Activated CD8-positive, alpha-beta T cell treated with anti-CD3 and anti-CD28 coated beads, Interleukin-2, amount 10 ng/mL, durations not matched to agents 7 days and 5 days (primary cell): ENCODE measurements at regions of chr12 and their contacts with region 1.

Region 1: DNA sequence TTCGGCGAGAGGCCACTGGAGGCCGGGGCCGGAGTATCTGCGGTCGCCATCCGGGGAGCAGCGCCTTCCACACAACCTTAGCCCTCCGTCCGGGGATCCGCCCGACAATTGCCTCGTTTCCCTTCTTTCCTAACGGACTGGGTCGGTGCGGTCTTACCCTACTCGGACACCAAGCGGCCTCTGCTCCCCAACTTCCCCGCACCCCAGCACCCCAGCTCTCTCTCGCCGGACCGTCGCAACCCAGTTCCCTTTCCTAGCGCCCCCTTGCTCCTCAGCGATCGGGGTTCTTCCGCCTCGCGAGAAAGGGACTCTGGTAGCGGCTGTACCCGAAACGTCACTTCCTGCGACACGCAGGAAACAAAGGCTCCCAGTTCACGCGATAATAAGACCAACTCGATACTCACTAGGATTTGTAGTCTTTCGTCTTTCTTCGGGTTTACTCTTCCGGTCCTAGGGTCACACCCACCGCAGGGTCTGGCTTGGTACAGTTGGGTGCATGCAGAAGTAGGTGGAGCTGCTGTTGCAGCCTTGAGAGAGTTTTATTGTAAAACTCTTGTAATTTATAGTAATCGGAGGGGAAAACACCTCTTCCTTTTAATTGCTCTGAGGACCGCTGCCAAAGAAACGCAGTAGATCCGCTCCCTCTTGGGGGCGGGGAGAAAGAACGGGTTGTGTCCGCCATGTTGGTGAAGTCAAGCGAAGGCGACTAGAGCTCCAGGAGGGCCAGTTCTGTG is at the start of gene ZFC3H1:
- DNase-seq: peak; percentile 96
- ATAC-seq: peak; percentile 90
- H3K4me3 Mint-ChIP-seq: peak within 1 kb of the TSS; percentile 98
- H3K27ac Mint-ChIP-seq: peak within 1 kb of the TSS; percentile 100
- H3K4me1 Mint-ChIP-seq: peaks cover 39% of the 10 kb centered on the region
- H3K27me3 Mint-ChIP-seq: no peaks in the 10 kb centered on the region
- total RNA-seq, gene ZFC3H1: 45.9 to 49.9 TPM

Region 2: GRCh38 chr12:71581206-71581605 is 82.5 kb before region 1 on chr12:
- CTCF ChIA-PET with region 1: no interaction called
- POLR2A ChIA-PET with region 1: no interaction called
- DNase-seq: no peak
- ATAC-seq: no peak
- H3K4me3 Mint-ChIP-seq: no peak overlapping the region
- H3K27ac Mint-ChIP-seq: no peak overlapping the region
- H3K4me1 Mint-ChIP-seq: no peaks in the 10 kb centered on the region
- H3K27me3 Mint-ChIP-seq: peaks cover 9% of the 10 kb centered on the region

Region 3: DNA sequence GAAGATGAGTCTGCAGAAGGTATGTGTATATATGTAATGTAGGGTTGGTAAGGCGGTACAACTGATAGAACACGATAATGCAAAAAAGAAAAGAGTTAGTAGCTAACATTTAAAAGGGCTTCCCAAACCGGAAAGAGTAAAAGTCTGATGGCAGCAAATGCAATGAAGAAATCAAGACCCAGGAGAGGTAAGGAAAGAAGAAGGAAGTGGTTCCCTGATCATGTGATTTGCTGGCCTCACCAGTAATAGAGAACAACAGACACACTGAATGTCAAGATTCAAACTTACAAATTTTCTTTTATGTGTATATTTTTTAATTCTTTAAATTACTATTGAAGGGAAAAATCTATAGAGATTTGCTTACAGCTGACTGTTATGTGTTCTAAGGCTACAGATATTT is 18.5 kb before region 1 on chr12:
- CTCF ChIA-PET with region 1: interaction called, 4 read pairs
- POLR2A ChIA-PET with region 1: interaction called, 20 read pairs
- DNase-seq: no peak
- ATAC-seq: no peak
- H3K4me3 Mint-ChIP-seq: no peak overlapping the region
- H3K27ac Mint-ChIP-seq: peak overlapping the region; percentile 62
- H3K4me1 Mint-ChIP-seq: peaks cover 15% of the 10 kb centered on the region
- H3K27me3 Mint-ChIP-seq: no peaks in the 10 kb centered on the region

Region 4: DNA sequence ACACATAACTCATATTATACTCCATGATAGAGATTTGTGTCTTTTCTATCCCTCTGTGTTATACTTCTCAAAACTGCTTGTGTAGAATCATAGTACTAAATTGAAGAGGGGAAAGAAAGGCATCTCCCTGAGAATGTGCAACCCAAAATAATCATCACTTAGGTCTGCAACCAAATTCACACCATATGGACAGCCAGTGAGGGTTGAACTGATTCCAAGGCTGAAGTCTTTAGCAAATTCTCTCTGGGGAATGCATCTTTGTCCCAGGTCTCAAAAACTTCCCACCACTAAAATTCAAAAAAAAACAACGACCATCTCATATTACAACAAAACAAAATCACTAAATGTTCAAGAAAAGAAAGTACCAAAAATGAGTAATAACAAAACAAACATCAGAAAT is 11.1 kb before region 1 on chr12:
- CTCF ChIA-PET with region 1: interaction called, 12 read pairs
- POLR2A ChIA-PET with region 1: interaction called, 5 read pairs
- DNase-seq: no peak
- ATAC-seq: no peak
- H3K4me3 Mint-ChIP-seq: no peak overlapping the region
- H3K27ac Mint-ChIP-seq: no peak overlapping the region
- H3K4me1 Mint-ChIP-seq: peaks cover 24% of the 10 kb centered on the region
- H3K27me3 Mint-ChIP-seq: no peaks in the 10 kb centered on the region

Region 5: DNA sequence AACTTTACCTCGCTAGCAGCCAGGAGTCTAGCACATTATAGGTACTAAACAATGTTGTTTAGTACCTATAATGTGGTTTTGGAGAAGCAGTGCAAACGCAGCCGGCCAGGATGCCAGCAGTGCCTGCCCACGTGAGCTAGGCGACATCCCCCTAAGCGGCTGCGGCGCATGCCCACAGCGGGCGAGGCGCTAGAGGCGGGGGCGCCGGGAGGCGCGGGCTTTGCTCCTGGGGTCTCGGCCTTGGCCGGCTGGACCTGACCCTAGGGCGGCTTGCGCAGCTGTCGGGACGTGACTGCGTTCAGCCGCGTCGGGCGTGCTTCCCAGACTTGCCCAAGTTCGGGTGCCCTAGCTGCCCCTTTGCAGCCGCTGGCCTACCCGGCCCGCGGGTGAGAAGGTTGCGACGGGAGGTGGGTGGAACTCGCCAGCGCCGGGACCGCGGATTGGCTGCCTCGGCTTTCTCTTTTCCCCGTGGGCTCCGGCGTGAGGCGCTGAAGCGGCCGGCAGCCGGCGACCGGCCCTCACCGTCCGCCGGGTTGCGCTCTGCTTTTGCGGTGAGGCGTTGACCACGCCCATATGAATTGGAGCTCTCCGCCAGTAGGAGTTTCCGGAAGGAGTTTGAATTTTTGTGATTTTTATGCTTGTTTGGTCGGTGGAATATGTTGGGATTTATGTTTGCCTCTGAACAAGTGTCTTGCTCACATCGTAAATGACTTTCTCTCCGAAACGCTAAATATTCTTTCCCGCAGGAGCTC is 22.4 kb after region 1 on chr12 and contains the start of gene TMEM19:
- CTCF ChIA-PET with region 1: interaction called, 41 read pairs
- POLR2A ChIA-PET with region 1: interaction called, 101 read pairs
- DNase-seq: peak; percentile 86
- ATAC-seq: peak; percentile 93
- H3K4me3 Mint-ChIP-seq: peak within 1 kb of the TSS; percentile 92
- H3K27ac Mint-ChIP-seq: peak within 1 kb of the TSS; percentile 95
- H3K4me1 Mint-ChIP-seq: peaks cover 30% of the 10 kb centered on the region
- H3K27me3 Mint-ChIP-seq: no peaks in the 10 kb centered on the region
- total RNA-seq, gene TMEM19: 22.1 to 23.9 TPM

Region 6: DNA sequence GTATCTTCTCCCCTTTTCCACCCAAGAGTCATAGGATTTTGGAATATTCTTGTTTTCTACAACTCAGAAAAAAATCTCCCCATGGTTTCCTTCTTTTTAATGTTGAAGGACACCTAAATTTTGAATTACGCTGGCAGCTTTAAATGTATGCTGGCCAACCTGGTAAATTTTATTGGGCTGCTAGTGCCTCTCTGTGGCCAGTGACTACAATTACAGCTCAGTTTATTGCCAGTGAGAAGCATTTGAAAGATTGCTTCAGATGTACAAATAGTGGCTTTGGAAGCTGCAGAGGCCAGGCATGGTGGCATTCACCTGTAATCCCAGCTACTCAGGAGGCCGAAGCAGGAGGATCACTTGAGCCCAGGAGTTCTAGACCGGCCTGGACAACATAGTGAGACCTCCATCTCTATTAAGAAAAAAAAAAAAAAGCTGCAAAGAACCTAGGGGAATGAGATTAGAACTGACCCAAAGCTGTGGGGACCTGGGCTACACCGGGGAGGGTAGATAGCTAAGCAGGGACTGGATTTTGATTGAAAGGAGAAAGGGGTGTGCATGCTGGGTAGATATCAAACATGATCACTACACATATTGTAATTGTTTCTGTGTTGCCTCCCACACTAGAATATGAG is 83.4 kb after region 1 on chr12:
- CTCF ChIA-PET with region 1: interaction called, 26 read pairs
- POLR2A ChIA-PET with region 1: interaction called, 9 read pairs
- DNase-seq: peak; percentile 60
- ATAC-seq: peak; percentile 77
- H3K4me3 Mint-ChIP-seq: no peak overlapping the region
- H3K27ac Mint-ChIP-seq: no peak overlapping the region
- H3K4me1 Mint-ChIP-seq: no peaks in the 10 kb centered on the region
- H3K27me3 Mint-ChIP-seq: peaks cover 37% of the 10 kb centered on the region

Region 7: DNA sequence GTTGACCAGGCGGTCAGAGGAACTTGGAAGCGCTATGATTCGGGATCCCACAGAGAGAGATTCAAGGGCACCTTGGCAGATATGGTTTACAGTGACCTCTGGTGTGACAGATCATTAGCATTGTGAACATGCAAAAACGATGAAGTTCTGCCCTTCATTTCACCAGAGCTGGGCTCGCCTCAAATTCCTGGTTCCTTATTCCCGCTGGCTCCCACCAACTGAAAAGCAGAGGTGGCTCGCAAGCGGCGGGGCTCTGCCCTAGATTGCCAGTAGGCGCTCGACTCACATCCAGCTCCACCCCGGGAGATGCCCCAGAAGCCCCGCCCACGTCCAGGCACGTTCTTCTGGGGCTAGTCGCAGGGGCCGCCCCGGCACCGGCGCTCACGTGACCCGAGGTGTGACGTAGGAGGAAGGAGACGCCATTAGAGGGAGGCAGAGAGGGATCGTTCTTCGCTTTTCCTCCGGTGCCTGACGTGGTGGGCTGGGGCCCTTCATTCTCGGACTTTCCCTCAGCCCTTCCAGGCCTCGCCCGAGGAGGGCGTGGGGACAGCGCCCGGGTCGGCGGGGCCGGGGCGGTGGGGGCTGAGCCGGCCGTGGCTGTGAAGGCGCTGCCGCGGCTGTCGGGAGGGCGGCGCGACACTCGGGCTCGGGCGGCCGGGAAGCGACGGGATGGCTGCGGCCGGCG is 90.9 kb after region 1 on chr12 and contains the start of gene RAB21:
- CTCF ChIA-PET with region 1: interaction called, 3 read pairs
- POLR2A ChIA-PET with region 1: interaction called, 35 read pairs
- DNase-seq: peak; percentile 99
- ATAC-seq: peak; percentile 96
- H3K4me3 Mint-ChIP-seq: peak within 1 kb of the TSS; percentile 93
- H3K27ac Mint-ChIP-seq: peak within 1 kb of the TSS; percentile 95
- H3K4me1 Mint-ChIP-seq: peaks cover 27% of the 10 kb centered on the region
- H3K27me3 Mint-ChIP-seq: peaks cover 19% of the 10 kb centered on the region
- total RNA-seq, gene RAB21: 55.7 to 56.3 TPM

Region 8: GRCh38 chr12:71840231-71840847 is 176.6 kb after region 1 on chr12:
- CTCF ChIA-PET with region 1: interaction called, 5 read pairs
- POLR2A ChIA-PET with region 1: interaction called, 21 read pairs
- DNase-seq: peak; percentile 38
- ATAC-seq: peak; percentile 27
- H3K4me3 Mint-ChIP-seq: peak overlapping the region; percentile 95
- H3K27ac Mint-ChIP-seq: peak overlapping the region; percentile 98
- H3K4me1 Mint-ChIP-seq: peaks cover 31% of the 10 kb centered on the region
- H3K27me3 Mint-ChIP-seq: no peaks in the 10 kb centered on the region